Tibial artery (tissue), 4 donors: ENCODE measurements at regions of chr20 and their contacts with region 1.

Region 1: GRCh38 chr20:63739130-63740069 is at the start of gene SLC2A4RG:
- DNase-seq: peak; percentile 62 to 90
- H3K4me3 ChIP-seq: peak within 1 kb of the TSS; percentile 84 to 93
- H3K27ac ChIP-seq: peak within 1 kb of the TSS; percentile 97 to 98
- H3K4me1 ChIP-seq: peaks cover 0 to 41% (median 31%) of the 10 kb centered on the region in 4 donors
- H3K27me3 ChIP-seq: no peaks in the 10 kb centered on the region
- CTCF ChIP-seq: no peak

Region 2: DNA sequence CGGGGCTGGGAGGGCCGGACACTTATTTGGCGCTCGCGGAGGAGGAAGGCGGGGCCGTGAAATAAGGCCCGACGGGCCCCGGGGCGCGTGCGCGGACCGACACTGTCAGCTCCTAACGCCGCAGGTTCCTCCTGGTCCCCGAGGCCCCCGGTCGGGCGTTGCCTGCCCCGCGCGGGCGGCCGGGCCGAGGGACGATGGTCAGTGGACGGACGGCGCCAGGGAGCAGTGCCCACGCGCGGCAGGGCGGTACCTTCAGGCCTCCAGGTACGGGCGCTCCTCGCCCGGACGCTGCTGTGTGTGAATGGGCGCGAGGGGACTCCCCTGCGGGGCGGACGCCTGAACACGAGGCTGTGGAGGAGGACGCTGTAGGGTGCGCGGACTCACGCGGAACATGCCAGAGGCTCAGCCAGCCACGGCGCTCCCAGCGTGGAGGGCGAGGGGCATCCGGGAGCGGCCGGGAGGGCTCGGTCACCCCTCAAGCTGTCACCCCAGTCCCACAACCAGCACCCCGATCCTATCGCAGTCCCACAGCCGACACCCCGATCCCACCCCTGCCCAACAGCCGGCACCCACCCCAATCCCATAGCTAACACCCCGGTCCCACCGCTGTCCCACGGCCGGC is 112.2 kb before region 1 on chr20:
- intact Hi-C with region 1: loop called (anchors 10 kb)
- DNase-seq: peak; percentile 92 to 96
- H3K4me3 ChIP-seq: peak overlapping the region; percentile 74 to 75
- H3K27ac ChIP-seq: peak overlapping the region; percentile 93 to 97
- H3K4me1 ChIP-seq: peaks cover 0 to 27% (median 20%) of the 10 kb centered on the region in 4 donors
- H3K27me3 ChIP-seq: no peaks in the 10 kb centered on the region
- CTCF ChIP-seq: no peak

Region 3: GRCh38 chr20:63657937-63658748 is 81.3 kb before region 1 on chr20 and contains the start of gene RTEL1:
- intact Hi-C with region 1: loop called (anchors 10 kb)
- DNase-seq: peak; percentile 91 to 95
- H3K4me3 ChIP-seq: peak within 1 kb of the TSS; percentile 64 to 76
- H3K27ac ChIP-seq: peak within 1 kb of the TSS; percentile 81 to 86
- H3K4me1 ChIP-seq: peaks cover 0 to 42% (median 30%) of the 10 kb centered on the region in 4 donors
- H3K27me3 ChIP-seq: peaks cover 0 to 5% of the 10 kb centered on the region in 2 donors
- CTCF ChIP-seq: peak in 1 of 2 experiments; percentile 45